ENCODE measurements at regions of chr12 and their contacts with region 1.

Region 1: DNA sequence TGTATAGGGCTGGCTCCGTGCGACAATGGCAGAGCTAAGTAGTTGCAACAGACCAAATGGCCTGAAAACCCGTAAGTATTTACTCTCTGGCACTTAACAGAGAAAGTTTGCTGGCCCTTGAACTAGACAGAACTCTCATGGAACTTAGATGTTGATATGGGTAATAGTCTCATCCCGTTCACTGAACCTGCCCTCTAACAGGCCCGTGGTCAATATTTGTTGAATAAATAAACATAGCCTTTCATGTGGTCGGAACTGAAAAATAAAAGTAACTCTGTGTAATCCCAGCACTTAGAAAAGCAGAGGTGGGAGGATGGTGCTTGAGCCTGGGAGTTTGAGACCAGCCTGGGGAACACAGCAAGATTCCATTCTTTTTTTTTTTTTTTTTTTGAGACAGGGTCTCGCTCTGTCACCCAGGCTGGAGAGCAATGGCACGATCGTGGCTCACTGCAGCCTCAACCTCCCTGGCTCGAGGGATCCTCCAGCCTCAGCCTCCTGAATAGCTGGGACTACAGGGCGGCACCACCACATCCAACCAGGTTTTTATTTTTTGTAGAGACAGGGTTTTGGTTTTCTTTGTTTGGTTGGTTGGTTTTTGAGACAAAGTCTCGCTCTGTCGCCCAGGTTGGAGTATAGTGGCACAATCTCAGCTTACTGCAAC is 29.7 kb downstream of the KDM2B start:
- DNase-seq: no peak
- H3K4me3 ChIP-seq: no peak overlapping the region
- H3K27ac ChIP-seq: no peak overlapping the region
- H3K4me1 ChIP-seq: no peaks in the 10 kb centered on the region
- H3K27me3 ChIP-seq: no peaks in the 10 kb centered on the region
- CTCF ChIP-seq: no peak

Region 2: GRCh38 chr12:121399391-121400331 is 151.4 kb before region 1 on chr12 and contains the start of gene RNF34:
- CTCF ChIA-PET with region 1: no interaction called
- dilution Hi-C with region 1: no loop called
- in situ Hi-C with region 1: no loop called
- intact Hi-C with region 1: no loop called
- DNase-seq: peak; percentile 99
- H3K4me3 ChIP-seq: peak within 1 kb of the TSS; percentile 71 to 86 (median 83)
- H3K27ac ChIP-seq: peak within 1 kb of the TSS; percentile 77
- H3K4me1 ChIP-seq: peaks cover 10% of the 10 kb centered on the region
- H3K27me3 ChIP-seq: no peaks in the 10 kb centered on the region
- CTCF ChIP-seq: no peak
- total RNA-seq, gene RNF34: 49.5 to 56.8 TPM

Region 3: DNA sequence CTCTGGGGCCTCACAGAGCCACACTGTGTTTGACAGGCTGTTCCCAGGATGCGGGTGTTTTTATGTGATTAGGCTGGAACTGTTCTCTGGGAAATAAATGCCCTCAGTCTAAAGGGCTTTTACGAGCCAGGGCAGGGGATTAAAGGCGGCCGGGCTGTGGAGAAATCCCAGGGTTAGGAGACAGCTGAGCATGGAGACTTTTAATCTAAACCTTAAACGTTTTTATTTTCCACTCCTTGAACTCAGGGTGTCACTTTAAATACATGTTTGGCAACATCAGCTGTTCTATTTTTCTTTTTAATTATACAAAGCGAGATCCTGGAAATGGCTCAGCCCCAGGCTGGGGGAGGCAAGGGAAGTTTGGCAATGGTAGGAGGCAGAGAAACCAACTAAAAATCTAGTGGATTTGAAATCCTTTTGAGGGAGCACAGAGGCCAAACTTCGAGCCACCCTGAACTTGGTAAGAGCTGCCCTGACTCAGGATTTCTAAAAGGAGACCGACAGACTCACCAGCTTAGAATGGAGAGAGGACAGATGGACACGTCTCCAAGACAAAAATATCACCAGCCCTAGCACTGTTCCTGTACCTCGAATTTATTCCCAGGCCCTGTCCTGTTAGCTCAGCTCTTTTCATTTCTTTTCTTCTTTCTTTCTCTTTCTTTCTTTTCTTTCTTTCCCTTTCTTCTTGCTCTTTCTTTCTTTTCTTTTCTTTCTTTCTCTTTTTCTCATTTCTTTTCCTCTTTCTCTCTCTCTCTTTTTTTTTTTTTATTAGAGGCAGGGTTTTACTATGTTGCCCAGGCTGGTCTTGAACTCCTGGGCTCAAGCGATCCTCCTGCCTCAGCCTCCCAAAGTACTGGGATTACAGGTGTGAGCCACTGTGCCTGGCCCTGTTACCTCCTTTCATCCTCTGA is 59.4 kb after region 1 on chr12:
- CTCF ChIA-PET with region 1: interaction called, 20 read pairs
- dilution Hi-C with region 1: no loop called
- in situ Hi-C with region 1: loop called in 1 of 2 experiments (anchors 10 kb)
- intact Hi-C with region 1: no loop called
- DNase-seq: no peak
- H3K4me3 ChIP-seq: no peak overlapping the region
- H3K27ac ChIP-seq: no peak overlapping the region
- H3K4me1 ChIP-seq: no peaks in the 10 kb centered on the region
- H3K27me3 ChIP-seq: no peaks in the 10 kb centered on the region
- CTCF ChIP-seq: no peak

Region 4: DNA sequence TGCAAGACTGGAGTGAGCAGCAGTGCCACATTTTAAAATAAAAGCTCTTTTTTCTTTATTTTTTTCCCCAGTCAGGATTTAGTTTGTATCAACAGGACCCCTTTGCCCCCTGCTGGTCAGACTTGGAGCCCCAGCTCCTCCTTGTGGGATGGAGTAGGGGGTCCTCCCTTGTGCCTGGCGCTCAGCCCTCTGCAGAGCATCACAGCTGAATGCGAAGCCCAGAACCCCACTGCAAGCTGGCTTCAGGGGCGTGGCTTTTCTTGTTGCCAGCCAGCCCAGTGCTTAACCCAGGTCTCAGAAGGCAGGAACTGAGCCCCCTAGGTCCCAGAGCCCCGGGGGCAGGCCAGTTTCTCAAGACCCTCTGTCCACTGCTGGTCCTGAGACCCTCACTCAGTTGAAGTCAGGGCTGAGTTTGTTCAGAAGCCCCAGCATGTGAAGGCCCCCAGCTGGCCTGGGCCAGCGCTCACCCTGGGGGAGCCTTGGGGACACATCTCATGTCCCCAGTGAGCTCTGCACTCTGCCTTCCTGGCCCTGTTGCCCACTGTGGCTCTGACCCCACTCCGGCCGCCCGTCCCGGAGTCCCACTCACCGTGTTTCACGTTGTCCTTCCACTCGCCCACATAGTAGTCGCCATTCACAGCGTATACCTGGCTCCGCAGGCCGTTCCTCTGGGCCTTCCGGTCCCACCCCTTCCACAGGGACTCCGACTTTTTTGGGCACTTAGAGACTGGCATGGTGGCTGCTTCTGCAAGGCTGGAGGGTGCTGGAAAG is 117.8 kb after region 1 on chr12:
- CTCF ChIA-PET with region 1: interaction called, 28 read pairs
- dilution Hi-C with region 1: no loop called
- in situ Hi-C with region 1: no loop called
- intact Hi-C with region 1: loop called (anchors 1 kb)
- DNase-seq: no peak
- H3K4me3 ChIP-seq: no peak overlapping the region
- H3K27ac ChIP-seq: no peak overlapping the region
- H3K4me1 ChIP-seq: peaks cover 14% of the 10 kb centered on the region
- H3K27me3 ChIP-seq: no peaks in the 10 kb centered on the region
- CTCF ChIP-seq: peak; percentile 42 to 51

Region 5: GRCh38 chr12:121748571-121749253 is 197.6 kb after region 1 on chr12:
- CTCF ChIA-PET with region 1: interaction called, 15 read pairs
- dilution Hi-C with region 1: no loop called
- in situ Hi-C with region 1: no loop called
- intact Hi-C with region 1: no loop called
- DNase-seq: no peak
- H3K4me3 ChIP-seq: no peak overlapping the region
- H3K27ac ChIP-seq: no peak overlapping the region
- H3K4me1 ChIP-seq: no peaks in the 10 kb centered on the region
- H3K27me3 ChIP-seq: no peaks in the 10 kb centered on the region
- CTCF ChIP-seq: no peak

Region 6: GRCh38 chr12:121883315-121883660 is 332.2 kb after region 1 on chr12:
- CTCF ChIA-PET with region 1: interaction called, 10 read pairs
- dilution Hi-C with region 1: no loop called
- in situ Hi-C with region 1: no loop called
- intact Hi-C with region 1: no loop called
- DNase-seq: no peak
- H3K4me3 ChIP-seq: no peak overlapping the region
- H3K27ac ChIP-seq: no peak overlapping the region
- H3K4me1 ChIP-seq: peaks cover 6% of the 10 kb centered on the region
- H3K27me3 ChIP-seq: no peaks in the 10 kb centered on the region
- CTCF ChIP-seq: no peak

Measured in mammary epithelial cell (primary cell).